Mammary epithelial cell (primary cell): ENCODE measurements at regions of chr11 and their contacts with region 1.

Region 1: DNA sequence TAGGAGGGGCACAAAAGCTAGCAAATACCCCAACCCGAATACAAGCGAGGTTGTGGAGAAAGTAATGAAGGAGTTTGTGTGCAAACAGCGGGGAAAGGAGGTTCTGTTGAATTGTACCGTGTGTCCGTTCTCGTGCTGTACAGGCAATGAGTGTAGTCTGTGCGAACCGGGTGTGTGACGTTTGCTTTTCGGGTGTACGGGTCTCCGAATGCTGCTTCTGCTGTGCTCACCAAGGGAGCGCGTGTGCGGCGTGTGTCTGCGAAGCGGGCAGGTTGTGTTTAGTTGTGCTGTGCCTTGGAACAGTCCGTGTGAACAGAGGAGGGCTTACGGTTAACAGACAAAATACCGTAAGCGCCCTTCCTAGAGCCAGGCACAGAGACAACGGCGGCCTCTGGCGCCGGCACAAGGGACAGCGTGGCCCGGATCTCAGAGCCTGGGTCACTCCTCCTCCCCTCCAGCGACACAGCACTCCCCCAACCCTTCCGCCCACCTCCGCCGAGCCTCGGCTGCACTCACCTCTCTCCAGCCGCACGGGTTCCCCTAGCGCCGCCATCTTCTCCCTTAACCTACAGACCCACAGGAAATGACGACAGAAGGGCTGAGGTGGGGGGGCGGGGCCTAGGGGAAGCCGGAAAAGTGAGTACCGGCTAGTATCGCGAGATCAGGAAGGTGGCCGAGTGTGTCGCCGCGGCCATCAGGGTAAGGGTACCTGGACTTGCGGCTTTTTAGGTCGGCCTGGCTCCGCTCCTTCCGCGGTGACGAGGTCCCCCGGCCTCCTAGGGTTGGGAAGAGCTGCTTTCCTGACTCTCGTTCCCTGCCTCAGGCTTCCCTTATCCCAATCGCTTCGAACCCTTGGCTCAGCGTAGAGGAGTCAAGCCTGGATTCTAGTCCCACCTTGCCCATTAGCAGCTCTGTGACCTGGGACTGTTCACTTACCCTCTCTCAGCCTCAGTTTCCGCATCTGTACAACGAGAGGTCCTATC is at the start of gene LIN7C:
- DNase-seq: peak; percentile 92
- H3K4me3 ChIP-seq: peak within 1 kb of the TSS; percentile 59 to 87 (median 81)
- H3K27ac ChIP-seq: peak within 1 kb of the TSS; percentile 89
- H3K4me1 ChIP-seq: peaks cover 14% of the 10 kb centered on the region
- H3K27me3 ChIP-seq: no peaks in the 10 kb centered on the region
- CTCF ChIP-seq: peak in 1 of 2 donors; percentile 10
- total RNA-seq, gene LIN7C: 43.7 to 76.3 TPM

Region 2: DNA sequence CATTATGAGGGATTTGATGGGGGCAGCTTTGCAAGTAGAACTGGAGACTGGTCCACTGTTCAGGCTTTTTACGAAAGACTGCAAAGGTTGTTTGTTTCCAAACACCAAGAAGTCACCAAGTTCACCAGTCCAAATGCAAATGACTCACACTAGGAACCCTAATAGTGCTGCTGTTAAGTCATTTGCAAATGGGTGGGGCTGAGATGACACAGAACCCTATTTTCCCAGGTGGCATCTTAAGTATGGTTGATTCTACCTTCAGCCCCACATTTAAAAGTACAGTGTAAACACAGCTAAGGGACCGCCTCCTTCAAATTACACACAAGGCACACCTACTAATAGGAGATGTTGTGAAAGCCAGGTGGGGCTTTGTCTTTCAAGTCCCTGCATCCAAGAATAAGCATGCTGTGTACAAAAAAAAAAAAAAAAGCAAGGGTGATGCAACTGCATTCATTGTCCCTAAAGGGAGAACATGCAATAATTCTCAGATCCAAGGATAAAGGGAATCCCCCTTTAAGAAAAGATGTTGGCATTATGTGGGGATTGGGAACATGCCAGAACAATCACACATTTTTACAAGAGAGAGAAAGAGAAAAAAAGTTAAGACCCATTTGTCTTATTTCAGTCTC is 166.5 kb after region 1 on chr11:
- CTCF ChIA-PET with region 1: no interaction called
- dilution Hi-C with region 1: no loop called
- in situ Hi-C with region 1: no loop called
- intact Hi-C with region 1: loop called (anchors 1 kb)
- DNase-seq: peak; percentile 92
- H3K4me3 ChIP-seq: peak overlapping the region; percentile 34 to 42 (median 37)
- H3K27ac ChIP-seq: peak overlapping the region; percentile 98
- H3K4me1 ChIP-seq: peaks cover 20% of the 10 kb centered on the region
- H3K27me3 ChIP-seq: no peaks in the 10 kb centered on the region
- CTCF ChIP-seq: no peak